ENCODE measurements at regions of chr14 and their contacts with region 1.

Region 1: GRCh38 chr14:32076278-32077080 is 625 bp upstream of the ARHGAP5 start:
- DNase-seq: peak; percentile 71
- H3K4me3 Mint-ChIP-seq: peak overlapping the region; percentile 96
- H3K27ac Mint-ChIP-seq: peak overlapping the region; percentile 96
- H3K4me1 Mint-ChIP-seq: peaks cover 42% of the 10 kb centered on the region
- H3K27me3 Mint-ChIP-seq: peaks cover 25% of the 10 kb centered on the region

Region 2: GRCh38 chr14:31026395-31027118 is 1049.9 kb before region 1 on chr14:
- intact Hi-C with region 1: loop called (anchors 5 kb)
- DNase-seq: peak; percentile 90
- H3K4me3 Mint-ChIP-seq: peak overlapping the region; percentile 99
- H3K27ac Mint-ChIP-seq: peak overlapping the region; percentile 96
- H3K4me1 Mint-ChIP-seq: peaks cover 55% of the 10 kb centered on the region
- H3K27me3 Mint-ChIP-seq: no peaks in the 10 kb centered on the region

Region 3: GRCh38 chr14:31420319-31421111 is 656.0 kb before region 1 on chr14 and contains the start of gene HEATR5A:
- intact Hi-C with region 1: loop called (anchors 1 kb)
- DNase-seq: peak; percentile 92
- H3K4me3 Mint-ChIP-seq: peak within 1 kb of the TSS; percentile 98
- H3K27ac Mint-ChIP-seq: peak within 1 kb of the TSS; percentile 90
- H3K4me1 Mint-ChIP-seq: peaks cover 26% of the 10 kb centered on the region
- H3K27me3 Mint-ChIP-seq: peaks cover 2% of the 10 kb centered on the region
- total RNA-seq, gene HEATR5A: 26.4 and 31.0 TPM in 2 replicates

Region 4: DNA sequence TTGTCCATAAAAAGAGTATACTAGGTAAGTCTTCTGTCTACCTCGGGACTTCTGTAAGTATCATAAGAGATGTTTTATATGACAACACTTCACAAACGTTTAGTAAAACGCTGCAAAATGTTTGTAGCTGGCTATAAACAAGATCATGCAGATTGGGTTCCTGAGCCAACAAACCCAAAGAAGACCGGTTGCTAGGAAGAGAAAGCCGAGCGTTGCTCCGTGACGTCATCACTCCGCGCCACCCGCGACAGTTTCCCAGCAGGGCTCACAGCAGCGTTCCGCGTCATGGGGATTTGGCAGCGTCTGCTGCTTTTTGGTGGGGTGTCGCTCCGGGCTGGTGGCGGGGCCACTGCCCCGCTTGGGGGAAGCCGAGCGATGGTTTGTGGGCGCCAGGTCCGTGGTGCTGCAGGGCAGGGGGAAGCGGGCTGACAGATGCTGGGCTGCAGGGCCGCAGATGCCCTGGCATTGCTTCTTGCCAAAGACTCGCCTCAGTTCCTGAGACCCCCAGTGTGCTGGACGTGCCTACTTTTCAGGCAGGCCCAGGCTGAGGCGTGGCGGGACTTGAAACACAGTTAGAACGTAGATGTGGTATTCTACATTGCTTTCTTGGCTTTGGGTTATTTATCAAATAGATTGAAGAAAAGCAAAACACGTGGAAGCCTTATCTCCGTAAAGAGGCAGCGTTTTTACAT is 515.2 kb before region 1 on chr14 and contains the start of gene NUBPL:
- intact Hi-C with region 1: loop called (anchors 2 kb)
- DNase-seq: peak; percentile 95
- H3K4me3 Mint-ChIP-seq: peak within 1 kb of the TSS; percentile 94
- H3K27ac Mint-ChIP-seq: peak within 1 kb of the TSS; percentile 98
- H3K4me1 Mint-ChIP-seq: peaks cover 23% of the 10 kb centered on the region
- H3K27me3 Mint-ChIP-seq: peaks cover 16% of the 10 kb centered on the region
- total RNA-seq, gene NUBPL: 12.0 and 13.7 TPM in 2 replicates

Region 5: DNA sequence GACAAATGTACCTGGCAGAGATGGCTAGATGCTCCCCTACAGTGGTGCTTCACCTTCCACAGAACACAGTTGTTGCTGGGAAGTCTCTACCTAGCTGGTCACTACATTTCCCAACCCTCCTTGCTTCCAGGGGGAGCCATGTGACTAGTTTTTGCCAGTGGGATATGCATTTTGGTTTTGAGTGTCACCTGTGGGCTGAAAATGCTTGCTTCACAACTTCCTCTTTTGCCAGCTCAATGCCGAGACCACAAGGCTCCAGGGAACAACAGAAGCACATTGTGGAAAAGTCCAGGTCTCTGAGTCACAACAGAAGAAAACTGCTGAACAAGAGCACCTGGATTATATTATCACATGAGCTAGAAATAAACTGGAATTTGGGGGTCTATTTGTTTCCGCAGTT is 47.9 kb before region 1 on chr14:
- intact Hi-C with region 1: no loop called
- DNase-seq: no peak
- H3K4me3 Mint-ChIP-seq: no peak overlapping the region
- H3K27ac Mint-ChIP-seq: no peak overlapping the region
- H3K4me1 Mint-ChIP-seq: no peaks in the 10 kb centered on the region
- H3K27me3 Mint-ChIP-seq: no peaks in the 10 kb centered on the region

Region 6: DNA sequence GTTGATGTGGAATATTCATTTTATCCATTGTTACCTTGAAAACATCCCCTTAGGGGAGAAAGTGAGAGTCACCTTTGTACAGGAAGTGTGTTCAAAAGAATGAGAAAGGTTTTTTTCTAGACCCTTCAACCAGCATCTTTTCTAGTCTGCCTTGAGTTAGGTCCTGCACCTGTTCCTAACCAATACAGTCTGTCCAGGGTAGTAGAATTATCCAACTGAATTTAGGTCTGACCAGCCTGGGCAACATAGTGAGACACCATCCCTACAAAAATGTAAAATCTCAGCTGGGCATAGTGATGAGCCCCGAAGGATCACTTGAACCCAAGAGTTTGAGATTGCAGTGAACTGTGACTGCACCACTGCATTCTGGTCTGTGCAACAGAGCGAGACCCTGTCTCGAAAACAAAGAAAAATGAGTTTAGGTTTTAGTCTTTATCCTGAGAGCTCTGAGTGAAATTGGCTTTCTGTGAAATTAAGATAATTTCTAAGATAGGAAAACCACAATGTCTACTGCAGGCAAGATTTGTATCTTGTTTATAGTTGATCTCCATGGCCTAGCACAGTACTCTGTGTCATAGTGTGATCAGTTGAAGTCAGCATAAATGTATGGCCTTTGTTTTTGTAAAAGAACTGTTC is 25.8 kb after region 1 on chr14:
- intact Hi-C with region 1: loop called (anchors 1 kb)
- DNase-seq: no peak
- H3K4me3 Mint-ChIP-seq: no peak overlapping the region
- H3K27ac Mint-ChIP-seq: no peak overlapping the region
- H3K4me1 Mint-ChIP-seq: peaks cover 21% of the 10 kb centered on the region
- H3K27me3 Mint-ChIP-seq: no peaks in the 10 kb centered on the region

Region 7: GRCh38 chr14:32469388-32470160 is 393.1 kb after region 1 on chr14:
- intact Hi-C with region 1: loop called (anchors 1 kb)
- DNase-seq: no peak
- H3K4me3 Mint-ChIP-seq: no peak overlapping the region
- H3K27ac Mint-ChIP-seq: no peak overlapping the region
- H3K4me1 Mint-ChIP-seq: no peaks in the 10 kb centered on the region
- H3K27me3 Mint-ChIP-seq: peaks cover 6% of the 10 kb centered on the region

Measured in activated T-helper 1 cell treated with anti-CD3 and anti-CD28 coated beads, Interleukin-12 subunit alpha, Interleukin-12 subunit beta, Interleukin-2, Interleukin-4 antibody, amounts not matched to agents 30 ng/mL and 10 ng/mL and 1 ng/mL, durations not matched to agents 14 hours and 24 hours and 36 hours (primary cell).